ENCODE measurements at regions of chr1 and their contacts with region 1.

Region 1: DNA sequence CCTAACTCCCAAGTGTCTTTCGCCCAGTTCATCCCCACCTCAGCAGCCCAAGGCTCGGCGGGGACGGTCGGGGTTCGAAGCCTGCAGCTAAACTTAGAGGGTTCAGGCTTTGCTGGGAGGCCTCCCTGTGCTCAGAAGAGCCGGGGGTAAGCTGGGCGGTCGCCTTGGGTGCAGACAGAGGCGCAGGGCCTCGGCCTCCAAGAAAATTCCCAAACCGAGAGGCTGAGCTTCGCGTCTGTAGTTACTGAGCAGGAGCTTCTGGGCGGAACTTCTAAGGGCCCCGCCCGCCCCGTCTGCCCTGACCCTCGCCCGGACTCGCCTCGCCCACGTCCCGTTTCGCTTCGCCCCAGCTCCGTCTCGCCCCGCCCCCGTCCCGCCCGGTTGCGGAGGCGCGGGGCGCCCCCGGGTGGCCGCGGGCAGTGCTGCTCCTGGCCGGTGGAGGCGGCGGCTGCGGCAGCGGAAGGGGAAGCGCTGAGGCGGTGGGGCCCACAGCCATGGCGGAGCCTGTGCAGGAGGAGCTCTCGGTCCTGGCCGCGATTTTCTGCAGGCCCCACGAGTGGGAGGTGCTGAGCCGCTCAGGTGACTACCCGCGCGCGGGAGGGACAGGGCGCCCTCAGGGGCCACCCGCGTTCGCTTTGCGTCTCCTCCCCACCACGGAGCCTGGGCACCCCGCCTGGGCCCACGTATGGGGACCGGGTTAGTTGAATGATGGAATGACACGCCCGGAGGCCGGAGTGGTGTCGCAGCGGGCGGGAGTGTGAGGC is at the start of gene RWDD3:
- DNase-seq: peak; percentile 89 to 96 (median 91)
- ATAC-seq: peak; percentile 93
- H3K4me3 ChIP-seq: peak within 1 kb of the TSS; percentile 79 to 93
- H3K4me3 Mint-ChIP-seq: peak within 1 kb of the TSS; percentile 85
- H3K27ac ChIP-seq: peak within 1 kb of the TSS; percentile 72 to 73
- H3K27ac Mint-ChIP-seq: peak within 1 kb of the TSS; percentile 90
- H3K4me1 ChIP-seq: peaks cover 15% of the 10 kb centered on the region
- H3K4me1 Mint-ChIP-seq: peaks cover 46% of the 10 kb centered on the region
- H3K27me3 ChIP-seq: no peaks in the 10 kb centered on the region
- H3K27me3 Mint-ChIP-seq: peaks cover 8% of the 10 kb centered on the region
- CTCF ChIP-seq: peak; percentile 79
- total RNA-seq, gene RWDD3: 14.9 to 17.8 TPM

Region 2: GRCh38 chr1:94417978-94418663 is 815.8 kb before region 1 on chr1 and contains the start of gene ABCD3:
- CTCF ChIA-PET with region 1: no interaction called
- POLR2A ChIA-PET with region 1: interaction called, 3 read pairs
- intact Hi-C with region 1: loop called (anchors 2 to 5 kb)
- DNase-seq: peak; percentile 93 to 99 (median 97)
- ATAC-seq: peak; percentile 91
- H3K4me3 ChIP-seq: peak within 1 kb of the TSS; percentile 63 to 81
- H3K4me3 Mint-ChIP-seq: no peak within 1 kb of the TSS
- H3K27ac ChIP-seq: peak within 1 kb of the TSS; percentile 67 to 85
- H3K27ac Mint-ChIP-seq: peak within 1 kb of the TSS; percentile 85
- H3K4me1 ChIP-seq: peaks cover 27% of the 10 kb centered on the region
- H3K4me1 Mint-ChIP-seq: peaks cover 42% of the 10 kb centered on the region
- H3K27me3 ChIP-seq: no peaks in the 10 kb centered on the region
- H3K27me3 Mint-ChIP-seq: peaks cover 2% of the 10 kb centered on the region
- CTCF ChIP-seq: no peak
- total RNA-seq, gene ABCD3: 17.9 to 18.1 TPM

Region 3: GRCh38 chr1:94926915-94927404 is 307.0 kb before region 1 on chr1 and contains the start of gene CNN3:
- CTCF ChIA-PET with region 1: no interaction called
- POLR2A ChIA-PET with region 1: no interaction called
- intact Hi-C with region 1: loop called in 1 of 2 experiments (anchors 1 kb)
- DNase-seq: peak; percentile 38 to 83 (median 70)
- ATAC-seq: peak; percentile 85
- H3K4me3 ChIP-seq: peak within 1 kb of the TSS; percentile 41 to 62
- H3K4me3 Mint-ChIP-seq: peak within 1 kb of the TSS; percentile 91
- H3K27ac ChIP-seq: peak within 1 kb of the TSS in 1 of 2 experiments; percentile 11
- H3K27ac Mint-ChIP-seq: peak within 1 kb of the TSS; percentile 74
- H3K4me1 ChIP-seq: peaks cover 16% of the 10 kb centered on the region
- H3K4me1 Mint-ChIP-seq: peaks cover 25% of the 10 kb centered on the region
- H3K27me3 ChIP-seq: peaks cover 0 to 4% of the 10 kb centered on the region in 2 experiments
- H3K27me3 Mint-ChIP-seq: peaks cover 9% of the 10 kb centered on the region
- CTCF ChIP-seq: no peak
- total RNA-seq, gene CNN3: 7.5 to 9.4 TPM

Region 4: GRCh38 chr1:95072532-95073419 is 161.1 kb before region 1 on chr1 and contains the start of gene ALG14:
- CTCF ChIA-PET with region 1: interaction called, 11 read pairs
- POLR2A ChIA-PET with region 1: interaction called, 21 read pairs
- intact Hi-C with region 1: loop called (anchors 1 kb)
- DNase-seq: peak; percentile 86 to 97 (median 95)
- ATAC-seq: peak; percentile 89
- H3K4me3 ChIP-seq: peak within 1 kb of the TSS; percentile 76 to 86
- H3K4me3 Mint-ChIP-seq: peak within 1 kb of the TSS; percentile 99
- H3K27ac ChIP-seq: peak within 1 kb of the TSS; percentile 61 to 86
- H3K27ac Mint-ChIP-seq: peak within 1 kb of the TSS; percentile 97
- H3K4me1 ChIP-seq: peaks cover 10% of the 10 kb centered on the region
- H3K4me1 Mint-ChIP-seq: peaks cover 13% of the 10 kb centered on the region
- H3K27me3 ChIP-seq: peaks cover 0 to 4% of the 10 kb centered on the region in 2 experiments
- H3K27me3 Mint-ChIP-seq: peaks cover 9% of the 10 kb centered on the region
- CTCF ChIP-seq: no peak
- total RNA-seq, gene ALG14: 0.27 to 0.61 TPM

Region 5: GRCh38 chr1:95116580-95117206 is 117.2 kb before region 1 on chr1:
- CTCF ChIA-PET with region 1: interaction called, 6 read pairs
- POLR2A ChIA-PET with region 1: no interaction called
- intact Hi-C with region 1: loop called in 1 of 2 experiments (anchors 5 kb)
- DNase-seq: peak in 8 of 9 experiments; percentile 14 to 69 (median 50)
- ATAC-seq: peak; percentile 73
- H3K4me3 ChIP-seq: peak overlapping the region; percentile 47 to 68
- H3K4me3 Mint-ChIP-seq: peak overlapping the region; percentile 90
- H3K27ac ChIP-seq: no peak overlapping the region
- H3K27ac Mint-ChIP-seq: no peak overlapping the region
- H3K4me1 ChIP-seq: peaks cover 5% of the 10 kb centered on the region
- H3K4me1 Mint-ChIP-seq: peaks cover 8% of the 10 kb centered on the region
- H3K27me3 ChIP-seq: peaks cover 0 to 6% of the 10 kb centered on the region in 2 experiments
- H3K27me3 Mint-ChIP-seq: peaks cover 49% of the 10 kb centered on the region
- CTCF ChIP-seq: peak; percentile 63

Region 6: DNA sequence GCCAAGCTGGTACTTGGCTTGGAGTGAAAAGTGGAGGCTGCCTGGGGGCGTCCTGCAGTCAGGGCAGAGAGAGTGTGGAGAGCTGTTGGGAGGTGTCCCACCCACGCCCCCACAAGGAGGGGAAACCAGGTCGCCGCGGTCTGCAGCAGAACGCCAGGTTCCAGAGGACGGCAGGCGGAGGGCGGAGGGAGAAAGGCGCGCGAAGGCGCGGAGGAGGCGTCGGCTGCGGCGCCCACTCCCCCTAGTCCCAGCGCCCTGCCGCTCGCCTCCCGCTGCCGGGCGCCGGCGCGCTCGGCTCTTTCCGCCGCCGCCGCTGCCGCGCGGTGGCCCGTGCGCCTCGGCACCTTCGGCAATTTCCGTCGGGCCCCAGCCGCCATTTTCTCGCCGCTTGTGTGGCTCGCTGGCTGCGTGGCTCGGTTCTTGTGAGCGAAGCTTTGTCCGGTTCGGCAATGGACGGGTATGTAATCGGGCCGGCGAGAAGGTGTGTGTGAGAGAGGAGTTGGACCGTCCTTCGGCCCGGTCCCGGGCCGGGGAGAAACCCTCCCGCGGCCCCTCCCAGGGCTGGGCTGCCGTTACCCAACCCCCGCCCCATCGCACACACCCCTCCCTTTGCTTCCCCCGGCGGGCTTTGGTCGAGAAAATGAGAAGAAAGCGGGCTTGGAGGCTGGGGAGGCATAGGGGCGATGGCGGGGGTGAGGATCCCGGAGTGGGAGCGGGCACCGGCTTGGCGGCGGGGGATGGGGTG is 1487.7 kb after region 1 on chr1 and contains the start of gene PTBP2:
- CTCF ChIA-PET with region 1: no interaction called
- POLR2A ChIA-PET with region 1: no interaction called
- intact Hi-C with region 1: loop called (anchors 10 kb)
- DNase-seq: peak; percentile 67 to 90 (median 82)
- ATAC-seq: peak; percentile 87
- H3K4me3 ChIP-seq: peak within 1 kb of the TSS; percentile 98 to 100
- H3K4me3 Mint-ChIP-seq: peak within 1 kb of the TSS; percentile 91
- H3K27ac ChIP-seq: peak within 1 kb of the TSS; percentile 88 to 89
- H3K27ac Mint-ChIP-seq: peak within 1 kb of the TSS; percentile 96
- H3K4me1 ChIP-seq: peaks cover 22% of the 10 kb centered on the region
- H3K4me1 Mint-ChIP-seq: peaks cover 28% of the 10 kb centered on the region
- H3K27me3 ChIP-seq: no peaks in the 10 kb centered on the region
- H3K27me3 Mint-ChIP-seq: no peaks in the 10 kb centered on the region
- CTCF ChIP-seq: no peak
- total RNA-seq, gene PTBP2: 30.6 to 32.9 TPM

Measured in CD8-positive, alpha-beta T cell (primary cell).